ENCODE measurements at regions of chr7 and their contacts with region 1.

Region 1: DNA sequence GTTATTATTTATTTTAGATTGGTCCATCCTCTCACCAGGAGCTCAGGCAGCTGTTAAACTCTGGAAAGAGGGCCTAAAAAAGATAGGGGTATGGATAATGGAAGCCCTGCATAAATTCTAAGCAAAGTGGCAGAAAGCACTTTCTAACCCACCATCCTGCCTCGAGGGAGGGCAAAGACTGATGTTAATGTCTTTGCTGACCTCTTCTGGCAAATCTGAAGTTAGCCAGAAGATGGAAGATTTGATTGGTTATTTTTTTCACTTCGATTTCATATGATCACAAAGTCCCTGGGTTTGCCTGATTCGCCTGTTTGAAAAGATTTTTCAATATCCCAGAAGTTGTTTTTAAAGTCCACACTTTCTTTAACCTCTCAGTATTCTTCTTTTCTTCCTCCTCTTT is 24.8 kb downstream of the OR9A2 start:
- DNase-seq: peak; percentile 42
- ATAC-seq: no peak
- H3K4me3 ChIP-seq: no peak overlapping the region
- H3K4me3 Mint-ChIP-seq: no peak overlapping the region
- H3K27ac ChIP-seq: no peak overlapping the region
- H3K27ac Mint-ChIP-seq: no peak overlapping the region
- H3K4me1 ChIP-seq: peaks cover 5 to 10% of the 10 kb centered on the region in 2 donors
- H3K4me1 Mint-ChIP-seq: peaks cover 7% of the 10 kb centered on the region
- H3K27me3 ChIP-seq: no peaks in the 10 kb centered on the region
- H3K27me3 Mint-ChIP-seq: no peaks in the 10 kb centered on the region
- CTCF ChIP-seq: peak; percentile 23

Region 2: GRCh38 chr7:142842251-142842766 is 159.8 kb before region 1 on chr7:
- CTCF ChIA-PET with region 1: no interaction called
- POLR2A ChIA-PET with region 1: no interaction called
- intact Hi-C with region 1: no loop called
- DNase-seq: no peak
- ATAC-seq: no peak
- H3K4me3 ChIP-seq: no peak overlapping the region
- H3K4me3 Mint-ChIP-seq: no peak overlapping the region
- H3K27ac ChIP-seq: no peak overlapping the region
- H3K27ac Mint-ChIP-seq: no peak overlapping the region
- H3K4me1 ChIP-seq: no peaks in the 10 kb centered on the region
- H3K4me1 Mint-ChIP-seq: no peaks in the 10 kb centered on the region
- H3K27me3 ChIP-seq: no peaks in the 10 kb centered on the region
- H3K27me3 Mint-ChIP-seq: no peaks in the 10 kb centered on the region
- CTCF ChIP-seq: no peak

Region 3: DNA sequence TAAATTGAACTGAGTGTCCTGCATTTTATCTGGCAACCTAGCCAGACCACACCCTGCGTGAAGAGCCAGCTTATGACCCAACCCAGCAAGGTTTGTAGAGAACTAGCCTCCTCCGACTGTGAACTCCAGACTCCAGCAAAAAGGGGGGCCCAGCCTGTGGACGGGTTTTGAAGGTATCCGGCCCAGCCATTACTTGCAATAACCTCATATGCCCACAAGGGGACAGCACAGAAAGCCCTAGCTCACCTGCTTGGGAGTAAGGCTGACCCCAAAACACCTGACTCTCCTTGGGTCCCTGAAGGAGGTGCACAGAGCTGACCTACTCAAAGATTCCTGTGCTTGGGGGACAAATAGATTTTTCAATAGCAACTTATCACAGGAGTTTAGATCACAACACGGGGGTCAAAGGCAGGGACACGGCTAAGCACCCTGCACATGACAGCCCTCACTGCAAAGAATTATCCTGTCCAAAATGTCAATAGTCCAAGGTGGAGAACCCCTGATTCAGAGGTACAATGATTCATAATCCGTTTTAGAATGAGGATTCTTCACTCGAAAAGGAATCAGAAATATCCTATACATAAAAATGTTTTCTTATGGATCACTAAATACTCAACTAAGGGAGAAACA is 121.1 kb before region 1 on chr7:
- CTCF ChIA-PET with region 1: interaction called, 10 read pairs
- POLR2A ChIA-PET with region 1: no interaction called
- intact Hi-C with region 1: loop called (anchors 1 kb)
- DNase-seq: peak; percentile 70
- ATAC-seq: peak; percentile 81
- H3K4me3 ChIP-seq: no peak overlapping the region
- H3K4me3 Mint-ChIP-seq: no peak overlapping the region
- H3K27ac ChIP-seq: no peak overlapping the region
- H3K27ac Mint-ChIP-seq: no peak overlapping the region
- H3K4me1 ChIP-seq: no peaks in the 10 kb centered on the region
- H3K4me1 Mint-ChIP-seq: no peaks in the 10 kb centered on the region
- H3K27me3 ChIP-seq: peaks cover 0 to 8% (median 1%) of the 10 kb centered on the region in 4 experiments
- H3K27me3 Mint-ChIP-seq: peaks cover 13% of the 10 kb centered on the region
- CTCF ChIP-seq: peak; percentile 92

Region 4: DNA sequence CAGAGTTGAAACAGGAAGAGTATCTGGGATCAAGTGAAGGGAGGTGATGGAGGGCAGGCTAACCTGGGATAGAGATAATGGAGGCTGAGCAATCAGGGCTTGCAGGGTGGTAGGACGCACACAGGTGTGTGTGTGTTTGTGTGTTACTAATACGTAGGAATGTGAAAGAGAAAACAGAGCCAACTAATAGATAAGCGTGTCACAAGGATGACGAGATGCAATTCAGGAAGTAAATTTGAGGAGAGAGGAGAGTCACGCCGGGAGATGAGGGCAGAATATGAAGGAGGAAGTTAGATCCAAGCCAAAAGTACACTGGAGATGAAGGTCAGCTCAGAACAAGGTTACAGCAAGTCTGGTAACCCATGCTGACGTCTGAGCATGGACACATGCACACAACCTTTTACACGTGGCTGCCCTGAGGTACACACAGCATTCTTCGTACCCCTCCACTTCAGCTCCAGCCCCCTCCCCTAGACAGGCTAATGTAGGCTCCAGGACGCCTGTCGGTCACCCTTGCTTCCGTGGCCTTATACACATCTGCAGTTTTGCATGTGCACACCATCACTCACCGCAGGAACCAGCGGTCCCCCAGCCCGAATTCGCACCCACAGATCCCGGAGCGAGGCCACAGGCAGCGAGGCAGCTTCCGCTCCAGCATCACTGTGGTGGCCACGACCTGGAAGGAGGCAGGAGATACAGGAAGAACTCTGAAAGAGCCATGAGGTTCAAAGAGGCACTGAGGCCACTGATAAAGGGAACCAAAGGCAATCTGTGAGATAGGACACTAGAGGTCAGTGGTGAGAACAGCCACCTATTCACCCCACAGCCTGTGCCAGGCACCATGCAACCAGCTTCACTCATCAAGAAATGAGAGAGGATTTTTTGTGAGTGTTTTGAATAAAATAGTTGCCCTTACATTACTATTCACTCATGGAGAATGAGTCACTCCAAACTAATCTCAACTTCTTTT is 92.9 kb before region 1 on chr7:
- CTCF ChIA-PET with region 1: interaction called, 21 read pairs
- POLR2A ChIA-PET with region 1: no interaction called
- intact Hi-C with region 1: loop called (anchors 1 kb)
- DNase-seq: peak; percentile 31
- ATAC-seq: peak; percentile 51
- H3K4me3 ChIP-seq: no peak overlapping the region
- H3K4me3 Mint-ChIP-seq: no peak overlapping the region
- H3K27ac ChIP-seq: no peak overlapping the region
- H3K27ac Mint-ChIP-seq: no peak overlapping the region
- H3K4me1 ChIP-seq: no peaks in the 10 kb centered on the region
- H3K4me1 Mint-ChIP-seq: no peaks in the 10 kb centered on the region
- H3K27me3 ChIP-seq: peaks cover 0 to 9% (median 3%) of the 10 kb centered on the region in 4 experiments
- H3K27me3 Mint-ChIP-seq: peaks cover 39% of the 10 kb centered on the region
- CTCF ChIP-seq: peak; percentile 29

Region 5: DNA sequence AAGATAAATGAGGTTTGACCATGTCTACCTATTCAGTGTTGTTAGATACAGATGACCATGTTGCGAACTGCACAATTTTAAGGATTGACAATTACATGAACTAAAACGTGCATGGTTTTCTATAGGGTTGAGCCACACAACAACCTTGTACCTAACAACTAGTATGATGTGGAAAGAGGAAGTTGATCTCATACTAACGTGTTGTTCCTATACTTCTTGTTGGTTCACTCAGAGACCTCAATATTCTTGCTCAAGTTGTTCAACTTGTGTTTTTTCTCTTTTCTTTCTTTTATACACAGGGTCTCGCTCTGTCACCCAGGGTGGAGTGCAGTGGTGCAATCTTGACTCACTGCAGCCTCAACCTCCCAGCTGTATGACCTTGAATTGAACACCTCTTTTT is 33.9 kb before region 1 on chr7:
- CTCF ChIA-PET with region 1: no interaction called
- POLR2A ChIA-PET with region 1: no interaction called
- intact Hi-C with region 1: no loop called
- DNase-seq: no peak
- ATAC-seq: no peak
- H3K4me3 ChIP-seq: no peak overlapping the region
- H3K4me3 Mint-ChIP-seq: no peak overlapping the region
- H3K27ac ChIP-seq: no peak overlapping the region
- H3K27ac Mint-ChIP-seq: no peak overlapping the region
- H3K4me1 ChIP-seq: no peaks in the 10 kb centered on the region
- H3K4me1 Mint-ChIP-seq: no peaks in the 10 kb centered on the region
- H3K27me3 ChIP-seq: peaks cover 0 to 21% (median 13%) of the 10 kb centered on the region in 4 experiments
- H3K27me3 Mint-ChIP-seq: peaks cover 49% of the 10 kb centered on the region
- CTCF ChIP-seq: no peak

Region 6: DNA sequence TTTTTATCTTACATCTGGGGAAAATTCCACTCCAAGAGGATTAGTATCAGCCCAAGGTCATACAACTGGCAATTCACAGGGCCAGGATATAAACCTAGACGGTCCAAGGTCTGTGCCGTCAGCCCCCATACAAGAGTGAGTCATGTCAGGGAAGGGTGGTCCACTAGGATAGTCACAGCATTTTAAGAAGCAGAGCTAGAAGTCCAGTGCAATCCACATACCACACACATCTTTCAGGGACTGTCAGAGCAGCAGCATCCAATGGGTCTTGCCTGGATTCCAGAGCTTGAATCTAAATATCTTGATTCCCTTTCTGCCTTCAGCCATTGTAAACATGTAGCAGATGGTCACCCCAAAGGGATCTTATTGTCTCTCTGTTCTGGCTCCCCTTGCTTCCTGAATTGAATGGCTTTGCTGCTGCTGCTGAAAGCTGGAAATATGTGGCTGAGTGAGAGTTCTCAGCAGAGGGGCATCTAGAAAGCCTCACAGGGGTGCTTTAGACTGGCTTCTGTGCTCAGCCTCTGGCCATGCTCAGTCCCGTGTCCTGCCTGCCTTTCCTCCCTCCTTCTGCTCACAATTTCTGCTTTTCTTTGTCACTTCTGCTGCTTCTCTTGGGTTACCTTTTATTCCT is 40.2 kb after region 1 on chr7:
- CTCF ChIA-PET with region 1: no interaction called
- POLR2A ChIA-PET with region 1: no interaction called
- intact Hi-C with region 1: no loop called
- DNase-seq: no peak
- ATAC-seq: no peak
- H3K4me3 ChIP-seq: no peak overlapping the region
- H3K4me3 Mint-ChIP-seq: no peak overlapping the region
- H3K27ac ChIP-seq: no peak overlapping the region
- H3K27ac Mint-ChIP-seq: no peak overlapping the region
- H3K4me1 ChIP-seq: peaks cover 8 to 9% of the 10 kb centered on the region in 2 donors
- H3K4me1 Mint-ChIP-seq: peaks cover 21% of the 10 kb centered on the region
- H3K27me3 ChIP-seq: no peaks in the 10 kb centered on the region
- H3K27me3 Mint-ChIP-seq: no peaks in the 10 kb centered on the region
- CTCF ChIP-seq: no peak